Activated naive CD4-positive, alpha-beta T cell treated with anti-CD3 and anti-CD28 coated beads for 36 hours (primary cell): ENCODE measurements at regions of chr1 and their contacts with region 1.

Region 1: GRCh38 chr1:237562242-237562823 is 328.4 kb downstream of the ZP4 start:
- DNase-seq: no peak
- H3K4me3 Mint-ChIP-seq: no peak overlapping the region
- H3K27ac Mint-ChIP-seq: no peak overlapping the region
- H3K4me1 Mint-ChIP-seq: no peaks in the 10 kb centered on the region
- H3K27me3 Mint-ChIP-seq: peaks cover 7% of the 10 kb centered on the region

Region 2: GRCh38 chr1:236868625-236869467 is 693.5 kb before region 1 on chr1:
- CTCF ChIA-PET with region 1: interaction called, 4 read pairs
- intact Hi-C with region 1: loop called (anchors 5 kb)
- DNase-seq: peak; percentile 61
- H3K4me3 Mint-ChIP-seq: no peak overlapping the region
- H3K27ac Mint-ChIP-seq: no peak overlapping the region
- H3K4me1 Mint-ChIP-seq: peaks cover 2% of the 10 kb centered on the region
- H3K27me3 Mint-ChIP-seq: no peaks in the 10 kb centered on the region

Region 3: DNA sequence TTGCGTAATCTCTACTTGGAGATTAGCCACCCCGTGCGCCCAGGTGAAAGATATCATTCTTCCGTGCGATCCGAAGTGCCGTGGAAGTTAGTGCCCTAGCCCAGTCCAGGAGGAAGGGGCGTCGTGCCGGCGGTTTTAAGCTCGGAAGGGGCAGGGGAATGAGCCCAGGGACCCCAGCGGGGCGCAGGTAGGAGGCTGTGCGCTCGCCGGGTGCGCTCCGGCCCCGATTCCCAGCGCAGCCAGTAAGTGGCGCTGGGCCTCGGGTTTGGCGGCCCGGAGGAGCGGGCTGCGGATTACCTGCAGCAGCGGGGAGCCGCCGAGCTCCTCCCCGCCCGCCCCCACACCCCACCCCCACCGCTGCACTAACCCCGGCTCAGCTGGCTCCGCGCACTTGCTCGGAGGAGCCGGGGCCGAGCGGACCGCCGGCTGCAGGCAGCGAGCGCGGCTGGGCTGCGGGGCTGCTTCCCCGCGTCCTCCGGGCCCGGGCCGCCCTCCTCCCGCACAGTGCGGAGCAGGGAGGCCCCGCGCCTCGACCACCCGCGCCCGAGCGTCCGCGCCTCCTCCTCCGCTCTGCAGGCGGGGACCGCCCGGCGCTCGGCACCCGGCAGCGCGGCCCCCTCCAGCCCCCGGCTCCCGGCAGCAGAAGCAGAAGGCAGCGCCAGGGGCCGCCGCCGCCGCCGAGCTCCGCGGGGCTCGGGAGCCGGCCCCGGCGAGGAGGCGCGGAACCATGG is 520.4 kb before region 1 on chr1 and contains the start of gene RYR2:
- CTCF ChIA-PET with region 1: no interaction called
- intact Hi-C with region 1: loop called (anchors 10 kb)
- DNase-seq: peak; percentile 8
- H3K4me3 Mint-ChIP-seq: peak within 1 kb of the TSS; percentile 3
- H3K27ac Mint-ChIP-seq: no peak within 1 kb of the TSS
- H3K4me1 Mint-ChIP-seq: peaks cover 12% of the 10 kb centered on the region
- H3K27me3 Mint-ChIP-seq: peaks cover 47% of the 10 kb centered on the region
- total RNA-seq, gene RYR2: not detected

Region 4: DNA sequence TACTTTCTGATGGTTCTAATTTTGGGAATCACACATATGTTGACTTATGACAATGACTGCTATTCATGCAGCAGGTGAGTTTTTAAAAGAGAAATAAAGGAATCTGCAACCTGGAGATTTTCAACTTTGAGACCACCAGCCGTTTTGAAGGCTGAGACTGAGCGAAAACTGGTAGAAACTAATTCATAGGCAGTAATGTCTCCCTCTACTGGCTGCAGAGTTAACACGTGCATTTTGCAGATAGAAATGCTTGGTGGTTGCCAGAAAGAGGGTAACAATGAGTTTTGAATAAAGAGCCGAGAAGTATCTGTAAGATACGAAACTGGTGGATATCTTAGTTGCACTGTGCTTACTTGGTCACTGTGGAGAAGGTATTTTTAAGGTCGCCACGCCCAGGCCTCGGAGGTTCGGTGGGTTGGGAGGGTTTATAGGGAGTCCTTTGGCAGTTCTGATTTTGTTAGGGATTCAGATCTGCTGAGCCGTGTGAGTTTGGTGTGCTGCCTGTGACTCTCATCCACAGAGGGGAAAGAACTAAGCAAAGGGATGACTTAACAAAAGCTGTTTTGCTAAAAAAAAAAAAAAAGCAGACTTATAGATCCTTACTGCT is 437.4 kb before region 1 on chr1:
- CTCF ChIA-PET with region 1: no interaction called
- intact Hi-C with region 1: loop called (anchors 5 kb)
- DNase-seq: no peak
- H3K4me3 Mint-ChIP-seq: no peak overlapping the region
- H3K27ac Mint-ChIP-seq: no peak overlapping the region
- H3K4me1 Mint-ChIP-seq: no peaks in the 10 kb centered on the region
- H3K27me3 Mint-ChIP-seq: no peaks in the 10 kb centered on the region

Region 5: GRCh38 chr1:237386362-237387143 is 175.8 kb before region 1 on chr1:
- CTCF ChIA-PET with region 1: no interaction called
- intact Hi-C with region 1: loop called (anchors 5 kb)
- DNase-seq: no peak
- H3K4me3 Mint-ChIP-seq: no peak overlapping the region
- H3K27ac Mint-ChIP-seq: no peak overlapping the region
- H3K4me1 Mint-ChIP-seq: no peaks in the 10 kb centered on the region
- H3K27me3 Mint-ChIP-seq: peaks cover 6% of the 10 kb centered on the region

Region 6: GRCh38 chr1:237748171-237748960 is 186.0 kb after region 1 on chr1:
- CTCF ChIA-PET with region 1: no interaction called
- intact Hi-C with region 1: no loop called
- DNase-seq: no peak
- H3K4me3 Mint-ChIP-seq: no peak overlapping the region
- H3K27ac Mint-ChIP-seq: no peak overlapping the region
- H3K4me1 Mint-ChIP-seq: no peaks in the 10 kb centered on the region
- H3K27me3 Mint-ChIP-seq: no peaks in the 10 kb centered on the region